ENCODE measurements at regions of chr4 and their contacts with region 1.

Region 1: DNA sequence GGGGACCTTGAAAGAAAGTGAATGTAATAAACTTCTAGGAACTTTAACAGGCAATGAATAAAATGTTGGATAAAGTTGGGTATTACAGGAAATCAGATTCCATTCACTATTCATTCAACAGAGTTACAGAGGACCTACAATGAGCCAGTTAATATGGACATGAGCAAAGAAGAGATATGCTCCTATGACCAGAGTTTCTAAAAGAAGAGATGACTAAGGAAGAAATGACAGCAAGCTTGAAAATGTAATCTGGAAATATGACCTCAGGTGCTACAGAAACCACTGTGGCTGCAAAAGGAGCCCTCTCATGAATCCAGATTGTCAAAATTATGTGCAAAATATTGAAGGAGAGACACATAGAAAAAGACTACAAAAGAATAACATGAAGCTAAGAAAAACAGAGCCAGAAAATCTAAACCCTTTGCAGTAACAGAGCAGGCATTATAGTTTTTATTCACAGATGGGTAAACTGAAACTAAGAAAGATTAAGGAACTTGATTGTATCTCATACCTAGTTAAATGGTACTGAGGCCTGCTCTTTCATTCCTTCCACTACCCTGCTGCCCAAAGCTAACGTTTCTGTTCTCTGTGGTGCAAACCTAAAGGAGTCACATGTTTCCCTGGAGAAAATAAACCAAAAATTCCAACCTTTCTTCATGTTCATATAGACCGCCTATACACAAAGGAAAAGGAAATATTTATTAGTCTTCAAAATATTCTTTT is 378.3 kb downstream of the GBA3 start:
- DNase-seq: no peak
- H3K4me3 ChIP-seq: no peak overlapping the region
- H3K27ac ChIP-seq: no peak overlapping the region
- H3K4me1 ChIP-seq: no peaks in the 10 kb centered on the region
- H3K27me3 ChIP-seq: no peaks in the 10 kb centered on the region
- CTCF ChIP-seq: no peak

Region 2: DNA sequence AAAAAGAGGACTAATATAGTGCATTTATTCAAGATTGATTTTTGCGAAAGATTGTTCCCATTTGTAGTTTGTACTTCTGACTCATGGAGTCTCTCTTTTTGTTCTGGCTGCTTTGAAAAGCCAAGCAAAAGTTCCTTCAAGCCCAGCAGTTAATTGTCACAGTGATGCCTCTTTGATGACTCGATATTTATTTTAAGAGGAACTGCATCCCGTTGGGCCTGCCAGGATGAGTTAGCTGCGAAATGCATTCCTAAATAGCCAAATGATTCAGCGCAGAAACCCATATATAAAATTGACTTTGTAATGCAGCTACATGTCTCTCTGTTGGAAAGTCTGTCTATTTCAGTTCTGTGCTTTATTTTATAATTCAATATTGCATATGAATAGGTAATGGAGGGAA is 83.1 kb before region 1 on chr4:
- CTCF ChIA-PET with region 1: no interaction called
- POLR2A ChIA-PET with region 1: no interaction called
- intact Hi-C with region 1: no loop called
- DNase-seq: no peak
- H3K4me3 ChIP-seq: no peak overlapping the region
- H3K27ac ChIP-seq: no peak overlapping the region
- H3K4me1 ChIP-seq: no peaks in the 10 kb centered on the region
- H3K27me3 ChIP-seq: no peaks in the 10 kb centered on the region
- CTCF ChIP-seq: no peak

Region 3: GRCh38 chr4:23269566-23269965 is 198.6 kb after region 1 on chr4:
- CTCF ChIA-PET with region 1: no interaction called
- POLR2A ChIA-PET with region 1: no interaction called
- intact Hi-C with region 1: no loop called
- DNase-seq: no peak
- H3K4me3 ChIP-seq: no peak overlapping the region
- H3K27ac ChIP-seq: no peak overlapping the region
- H3K4me1 ChIP-seq: no peaks in the 10 kb centered on the region
- H3K27me3 ChIP-seq: no peaks in the 10 kb centered on the region
- CTCF ChIP-seq: no peak

Region 4: GRCh38 chr4:23368081-23368697 is 297.2 kb after region 1 on chr4:
- CTCF ChIA-PET with region 1: interaction called, 16 read pairs
- POLR2A ChIA-PET with region 1: no interaction called
- intact Hi-C with region 1: no loop called
- DNase-seq: no peak
- H3K4me3 ChIP-seq: no peak overlapping the region
- H3K27ac ChIP-seq: no peak overlapping the region
- H3K4me1 ChIP-seq: no peaks in the 10 kb centered on the region; the same call in 1 of the 2 replicates
- H3K27me3 ChIP-seq: no peaks in the 10 kb centered on the region
- CTCF ChIP-seq: no peak

Measured in PC-9 (cell line).